CD14-positive monocyte (primary cell): ENCODE measurements at regions of chr1 and their contacts with region 1.

Region 1: GRCh38 chr1:145963995-145964901 is at the starts of genes ANKRD34A and POLR3GL:
- DNase-seq: peak; percentile 83 to 92 (median 87)
- H3K4me3 ChIP-seq: peak within 1 kb of the TSS; percentile 55 to 89 (median 59)
- H3K4me3 Mint-ChIP-seq: peak within 1 kb of the TSS; percentile 94 to 96
- H3K27ac ChIP-seq: peak within 1 kb of the TSS; percentile 31 to 82
- H3K27ac Mint-ChIP-seq: peak within 1 kb of the TSS; percentile 62 to 96 (median 88)
- H3K4me1 ChIP-seq: peaks cover 52 to 61% of the 10 kb centered on the region in 2 donors
- H3K4me1 Mint-ChIP-seq: peaks cover 57% of the 10 kb centered on the region
- H3K27me3 ChIP-seq: peaks cover 6 to 31% of the 10 kb centered on the region in 2 donors
- H3K27me3 Mint-ChIP-seq: peaks cover 30 to 36% (median 30%) of the 10 kb centered on the region in 3 donors
- CTCF ChIP-seq: no peak
- polyA plus RNA-seq, gene ANKRD34A: 0.31 TPM in 1 of 3 donors, not detected in the others
- polyA plus RNA-seq, gene POLR3GL: 11.6 to 39.0 (median 36.2) TPM

Region 2: GRCh38 chr1:145845514-145846161 is 118.6 kb before region 1 on chr1 and contains the start of gene NUDT17:
- intact Hi-C with region 1: no loop called
- DNase-seq: peak; percentile 64 to 72 (median 71)
- H3K4me3 ChIP-seq: peak within 1 kb of the TSS; percentile 72 to 98 (median 88)
- H3K4me3 Mint-ChIP-seq: no peak within 1 kb of the TSS
- H3K27ac ChIP-seq: peak within 1 kb of the TSS; percentile 63 to 90
- H3K27ac Mint-ChIP-seq: peak within 1 kb of the TSS in 3 of 7 donors; percentile 21 to 69 (median 58)
- H3K4me1 ChIP-seq: peaks cover 19 to 25% of the 10 kb centered on the region in 2 donors
- H3K4me1 Mint-ChIP-seq: peaks cover 6% of the 10 kb centered on the region
- H3K27me3 ChIP-seq: no peaks in the 10 kb centered on the region
- H3K27me3 Mint-ChIP-seq: peaks cover 0 to 3% (median 0%) of the 10 kb centered on the region in 3 donors
- CTCF ChIP-seq: peak; percentile 91
- polyA plus RNA-seq, gene NUDT17: 2.1 to 6.4 (median 3.1) TPM

Region 3: GRCh38 chr1:145858894-145859490 is 105.3 kb before region 1 on chr1 and contains the start of gene PIAS3:
- intact Hi-C with region 1: loop called in 1 of 2 experiments (anchors 10 kb)
- DNase-seq: peak; percentile 79 to 84 (median 80)
- H3K4me3 ChIP-seq: peak within 1 kb of the TSS; percentile 94 to 99 (median 99)
- H3K4me3 Mint-ChIP-seq: peak within 1 kb of the TSS; percentile 97 to 98
- H3K27ac ChIP-seq: peak within 1 kb of the TSS; percentile 70 to 85
- H3K27ac Mint-ChIP-seq: peak within 1 kb of the TSS; percentile 87 to 95 (median 93)
- H3K4me1 ChIP-seq: peaks cover 13 to 18% of the 10 kb centered on the region in 2 donors
- H3K4me1 Mint-ChIP-seq: peaks cover 14% of the 10 kb centered on the region
- H3K27me3 ChIP-seq: no peaks in the 10 kb centered on the region
- H3K27me3 Mint-ChIP-seq: peaks cover 0 to 4% (median 2%) of the 10 kb centered on the region in 3 donors
- CTCF ChIP-seq: no peak
- polyA plus RNA-seq, gene PIAS3: 7.2 to 25.9 (median 8.8) TPM

Region 4: DNA sequence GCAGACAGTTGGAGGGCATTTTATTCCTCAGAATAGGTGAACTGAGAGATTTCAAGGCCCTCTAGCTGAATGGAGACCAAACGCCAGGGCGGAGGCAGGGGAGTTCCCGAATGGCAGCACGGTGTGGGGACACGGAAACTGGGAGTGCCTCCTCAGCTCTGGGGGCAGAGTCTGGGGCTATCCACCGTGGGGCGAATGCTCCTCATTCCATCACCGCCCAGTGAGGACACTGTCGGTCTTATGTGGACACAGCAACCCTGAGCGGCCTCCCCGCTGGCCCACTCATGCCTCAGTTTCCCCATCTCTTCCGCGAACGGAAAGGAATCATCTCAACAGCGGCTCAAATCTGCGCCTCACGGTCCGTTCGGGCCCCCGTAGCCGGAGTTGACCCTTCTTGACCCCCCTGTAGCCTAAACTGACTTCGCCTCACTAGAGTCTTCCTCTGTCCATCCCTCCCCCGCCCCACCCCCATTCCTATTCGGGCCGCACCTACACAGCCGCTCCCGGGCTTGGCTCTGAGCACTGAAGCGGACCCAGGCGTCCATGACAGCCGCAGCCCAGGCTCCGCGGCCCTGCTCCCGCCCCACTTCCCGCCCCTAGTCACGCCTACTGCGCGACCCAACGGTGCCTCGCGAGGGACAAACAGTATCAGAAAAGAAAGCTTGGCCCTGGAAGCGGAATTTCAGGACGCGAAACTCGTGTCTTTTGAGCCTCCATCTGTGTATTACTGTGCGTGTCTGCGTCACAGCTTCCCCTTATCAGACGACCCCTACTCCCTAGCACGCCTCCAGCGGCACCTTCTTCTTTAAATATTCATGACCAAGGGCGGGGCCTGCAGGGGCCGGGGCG is 45.9 kb before region 1 on chr1 and contains the start of gene PEX11B:
- intact Hi-C with region 1: loop called in 1 of 2 experiments (anchors 5 kb)
- DNase-seq: peak; percentile 95 to 98 (median 95)
- H3K4me3 ChIP-seq: peak within 1 kb of the TSS; percentile 70 to 98 (median 88)
- H3K4me3 Mint-ChIP-seq: peak within 1 kb of the TSS; percentile 88 to 93
- H3K27ac ChIP-seq: peak within 1 kb of the TSS; percentile 74 to 82
- H3K27ac Mint-ChIP-seq: peak within 1 kb of the TSS; percentile 89 to 97 (median 96)
- H3K4me1 ChIP-seq: peaks cover 27 to 39% of the 10 kb centered on the region in 2 donors
- H3K4me1 Mint-ChIP-seq: peaks cover 41% of the 10 kb centered on the region
- H3K27me3 ChIP-seq: no peaks in the 10 kb centered on the region
- H3K27me3 Mint-ChIP-seq: peaks cover 0 to 3% (median 3%) of the 10 kb centered on the region in 3 donors
- CTCF ChIP-seq: no peak
- polyA plus RNA-seq, gene PEX11B: 12.0 to 38.2 (median 37.9) TPM

Region 5: DNA sequence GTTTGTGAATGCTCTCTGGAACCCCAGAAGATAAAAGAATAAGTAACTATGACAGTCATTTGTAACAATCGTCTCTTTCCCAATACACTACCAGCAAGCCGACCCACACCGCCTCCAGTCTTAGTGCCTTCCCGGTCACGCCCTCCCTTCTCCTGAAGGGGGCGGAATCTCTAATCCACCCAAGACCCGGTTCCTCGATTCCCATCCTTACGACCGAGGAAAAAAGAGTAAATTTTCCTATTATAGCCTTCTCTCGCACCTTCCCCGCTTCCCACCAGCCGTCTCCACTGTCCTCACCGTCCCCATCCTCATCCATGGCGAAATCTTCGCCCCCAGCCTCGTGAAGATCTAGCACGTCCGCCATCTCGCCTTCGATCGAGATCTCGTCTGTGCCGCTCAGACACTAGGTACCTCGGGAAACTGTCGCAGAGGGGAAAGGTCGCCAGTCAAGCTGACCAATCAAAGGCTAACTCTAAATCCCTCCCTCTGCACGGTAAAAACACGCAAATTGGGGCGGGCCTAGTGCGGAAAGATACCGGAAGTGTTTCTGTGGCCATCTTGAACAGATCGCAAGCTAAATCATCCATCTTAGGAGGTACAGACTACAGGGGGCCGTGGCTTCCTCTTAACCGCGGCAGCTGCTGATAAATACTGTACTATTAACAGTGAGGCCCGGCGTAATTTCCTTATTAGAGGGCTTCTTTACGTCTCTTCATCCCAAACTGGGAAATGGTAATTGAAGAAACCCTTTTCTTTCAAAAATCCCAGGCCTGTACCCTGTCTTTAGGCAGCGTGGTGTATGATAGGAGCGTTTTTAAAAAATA is 37.0 kb before region 1 on chr1 and contains the start of gene RBM8A:
- intact Hi-C with region 1: loop called in 1 of 2 experiments (anchors 2 kb)
- DNase-seq: peak; percentile 98 to 99 (median 98)
- H3K4me3 ChIP-seq: peak within 1 kb of the TSS; percentile 79 to 94 (median 85)
- H3K4me3 Mint-ChIP-seq: no peak within 1 kb of the TSS
- H3K27ac ChIP-seq: peak within 1 kb of the TSS; percentile 96 to 97
- H3K27ac Mint-ChIP-seq: no peak within 1 kb of the TSS
- H3K4me1 ChIP-seq: peaks cover 21 to 28% of the 10 kb centered on the region in 2 donors
- H3K4me1 Mint-ChIP-seq: peaks cover 12% of the 10 kb centered on the region
- H3K27me3 ChIP-seq: no peaks in the 10 kb centered on the region
- H3K27me3 Mint-ChIP-seq: no peaks in the 10 kb centered on the region
- CTCF ChIP-seq: peak; percentile 83
- polyA plus RNA-seq, gene RBM8A: 91.5 to 171 (median 115) TPM

Region 6: DNA sequence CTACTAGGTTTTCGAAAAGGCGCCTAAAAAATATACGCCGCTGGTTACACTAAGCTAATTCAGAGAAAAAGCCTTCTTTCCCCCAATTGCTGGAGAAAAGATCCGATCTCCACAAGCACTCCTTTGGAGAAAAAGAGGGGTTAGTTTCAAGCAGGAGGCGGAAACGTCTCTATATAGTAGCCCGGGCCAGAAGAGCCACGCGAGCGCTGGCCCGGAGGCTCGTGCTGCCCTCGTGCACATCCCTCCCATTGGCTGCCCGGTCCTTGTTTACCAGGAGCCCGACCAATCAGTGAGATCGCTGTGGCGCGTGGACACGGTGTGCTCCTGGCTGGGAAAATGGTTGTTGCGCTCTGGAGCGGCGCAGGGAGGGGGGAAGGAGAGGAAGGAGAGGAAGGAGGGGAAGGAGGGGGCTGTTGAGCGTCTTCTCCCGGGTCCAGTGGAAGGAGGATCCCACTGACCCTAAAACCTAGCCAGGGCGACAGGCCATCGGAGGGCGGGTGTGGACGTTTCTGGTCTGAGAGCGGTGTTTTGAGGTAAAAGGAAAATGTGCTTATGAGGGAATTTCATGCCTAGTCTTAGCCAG is 32.3 kb after region 1 on chr1 and contains the start of gene TXNIP:
- intact Hi-C with region 1: loop called (anchors 5 kb)
- DNase-seq: peak; percentile 91 to 97 (median 96)
- H3K4me3 ChIP-seq: peak within 1 kb of the TSS; percentile 87 to 100 (median 99)
- H3K4me3 Mint-ChIP-seq: peak within 1 kb of the TSS; percentile 99 to 100
- H3K27ac ChIP-seq: peak within 1 kb of the TSS; percentile 78 to 84
- H3K27ac Mint-ChIP-seq: peak within 1 kb of the TSS; percentile 93 to 99 (median 97)
- H3K4me1 ChIP-seq: peaks cover 46 to 67% of the 10 kb centered on the region in 2 donors
- H3K4me1 Mint-ChIP-seq: peaks cover 65% of the 10 kb centered on the region
- H3K27me3 ChIP-seq: no peaks in the 10 kb centered on the region
- H3K27me3 Mint-ChIP-seq: peaks cover 0 to 5% (median 0%) of the 10 kb centered on the region in 3 donors
- CTCF ChIP-seq: no peak
- polyA plus RNA-seq, gene TXNIP: 640 to 3,778 (median 844) TPM